ENCODE measurements at regions of chr9 and their contacts with region 1.

Region 1: GRCh38 chr9:35079426-35080341 is at the start of gene FANCG:
- DNase-seq: peak; percentile 89
- H3K4me3 Mint-ChIP-seq: peak within 1 kb of the TSS; percentile 95
- H3K27ac Mint-ChIP-seq: peak within 1 kb of the TSS; percentile 99
- H3K4me1 Mint-ChIP-seq: peaks cover 40% of the 10 kb centered on the region
- H3K27me3 Mint-ChIP-seq: no peaks in the 10 kb centered on the region
- total RNA-seq, gene FANCG: 97.0 to 100 TPM

Region 2: GRCh38 chr9:35051069-35051967 is 28.4 kb before region 1 on chr9:
- CTCF ChIA-PET with region 1: interaction called, 4 read pairs
- POLR2A ChIA-PET with region 1: interaction called, 10 read pairs
- DNase-seq: peak; percentile 49
- H3K4me3 Mint-ChIP-seq: no peak overlapping the region
- H3K27ac Mint-ChIP-seq: no peak overlapping the region
- H3K4me1 Mint-ChIP-seq: no peaks in the 10 kb centered on the region
- H3K27me3 Mint-ChIP-seq: no peaks in the 10 kb centered on the region

Region 3: GRCh38 chr9:35096035-35096849 is 16.6 kb after region 1 on chr9 and contains the start of gene PIGO:
- CTCF ChIA-PET with region 1: interaction called, 43 read pairs
- POLR2A ChIA-PET with region 1: interaction called, 132 read pairs
- DNase-seq: peak; percentile 89
- H3K4me3 Mint-ChIP-seq: peak within 1 kb of the TSS; percentile 82
- H3K27ac Mint-ChIP-seq: peak within 1 kb of the TSS; percentile 86
- H3K4me1 Mint-ChIP-seq: peaks cover 44% of the 10 kb centered on the region
- H3K27me3 Mint-ChIP-seq: no peaks in the 10 kb centered on the region
- total RNA-seq, gene PIGO: 22.8 to 28.6 TPM

Region 4: DNA sequence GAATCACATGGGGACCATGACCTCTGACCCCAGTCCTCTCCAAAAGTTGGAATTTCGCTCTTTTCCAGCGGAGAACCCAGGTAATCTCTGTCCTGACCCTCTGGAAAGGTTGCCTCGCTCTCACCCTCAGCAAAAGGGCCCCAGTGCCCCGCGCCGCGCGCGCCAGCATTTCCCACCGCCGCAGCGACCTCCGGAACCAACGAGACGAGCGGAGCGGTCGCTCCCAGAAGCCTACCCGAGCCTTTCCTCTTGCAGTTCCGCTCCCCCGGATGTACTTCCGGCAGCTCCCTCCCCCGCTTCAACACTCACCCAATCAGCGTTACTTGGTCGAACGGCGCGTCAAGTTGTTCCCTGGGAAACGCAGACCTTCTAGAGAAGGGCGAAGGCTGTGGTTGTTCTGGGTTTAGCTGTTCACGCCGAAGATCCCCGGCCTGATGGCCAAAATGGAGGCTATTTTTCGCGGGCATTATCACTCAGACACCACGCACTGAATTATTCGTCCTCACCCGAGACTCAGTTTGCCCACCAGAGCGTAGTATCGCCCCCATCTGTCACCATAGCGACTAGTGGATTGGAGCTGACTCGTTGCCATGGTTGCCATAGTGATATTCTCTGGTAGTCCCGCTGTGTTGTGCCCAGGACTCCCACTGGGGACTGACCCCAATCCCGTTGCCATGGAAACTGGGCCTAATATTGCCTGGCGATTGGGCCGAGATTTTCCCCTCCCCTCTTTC is 23.4 kb after region 1 on chr9 and contains the start of gene STOML2:
- CTCF ChIA-PET with region 1: interaction called, 43 read pairs
- POLR2A ChIA-PET with region 1: interaction called, 132 read pairs
- DNase-seq: peak; percentile 95
- H3K4me3 Mint-ChIP-seq: peak within 1 kb of the TSS; percentile 80
- H3K27ac Mint-ChIP-seq: peak within 1 kb of the TSS; percentile 88
- H3K4me1 Mint-ChIP-seq: peaks cover 39% of the 10 kb centered on the region
- H3K27me3 Mint-ChIP-seq: no peaks in the 10 kb centered on the region
- total RNA-seq, gene STOML2: 96.0 to 96.9 TPM

Region 5: DNA sequence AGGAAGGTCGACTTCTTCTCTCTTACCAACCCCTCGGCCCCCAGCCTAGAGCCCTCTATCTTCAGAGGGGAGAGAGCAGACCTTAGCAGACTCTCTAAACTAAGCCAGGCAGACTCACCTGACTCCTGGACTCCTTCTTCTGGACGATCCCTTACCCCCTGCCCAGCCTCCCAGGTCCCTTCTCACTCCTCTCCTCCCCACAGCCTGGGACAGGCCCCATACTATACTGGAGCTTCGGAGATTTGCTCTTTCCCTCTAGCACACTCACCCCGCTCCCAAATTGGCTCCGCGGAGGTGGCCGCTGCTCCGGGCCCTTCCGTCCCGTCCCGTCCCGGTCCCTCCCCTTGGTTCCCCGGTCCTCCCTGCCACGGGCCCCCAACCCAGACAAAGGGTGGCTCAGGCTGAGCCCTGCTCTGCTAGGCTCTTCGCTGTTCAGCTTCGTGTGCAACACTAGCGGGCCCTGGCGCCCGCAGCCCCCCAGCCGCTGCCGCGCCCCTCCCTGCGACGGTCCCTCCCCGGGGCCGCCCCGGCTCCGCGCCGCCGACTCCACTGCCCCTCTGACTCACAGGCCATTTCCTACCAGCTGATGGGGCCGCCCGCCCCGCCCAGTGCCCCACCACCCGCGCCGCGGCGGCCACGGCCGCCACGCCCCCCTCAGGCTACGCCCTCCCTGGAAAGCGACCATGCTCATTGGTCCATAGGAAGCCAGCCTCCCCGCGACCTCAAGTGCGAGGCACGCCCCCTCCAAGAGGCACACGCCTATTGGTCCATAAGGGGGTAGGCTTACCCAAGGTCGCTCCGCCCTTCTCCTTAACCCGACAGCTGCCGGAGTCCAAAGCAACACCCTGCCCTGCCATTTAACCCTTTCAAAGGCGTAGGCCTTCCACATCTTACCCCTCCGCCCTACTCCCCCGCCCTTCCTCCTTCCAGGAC is 31.6 kb after region 1 on chr9:
- CTCF ChIA-PET with region 1: interaction called, 6 read pairs
- POLR2A ChIA-PET with region 1: interaction called, 38 read pairs
- DNase-seq: peak; percentile 97
- H3K4me3 Mint-ChIP-seq: peak overlapping the region; percentile 73
- H3K27ac Mint-ChIP-seq: peak overlapping the region; percentile 79
- H3K4me1 Mint-ChIP-seq: peaks cover 54% of the 10 kb centered on the region
- H3K27me3 Mint-ChIP-seq: no peaks in the 10 kb centered on the region